AG04450 (cell line): ENCODE measurements at regions of chr6 and their contacts with region 1.

Region 1: DNA sequence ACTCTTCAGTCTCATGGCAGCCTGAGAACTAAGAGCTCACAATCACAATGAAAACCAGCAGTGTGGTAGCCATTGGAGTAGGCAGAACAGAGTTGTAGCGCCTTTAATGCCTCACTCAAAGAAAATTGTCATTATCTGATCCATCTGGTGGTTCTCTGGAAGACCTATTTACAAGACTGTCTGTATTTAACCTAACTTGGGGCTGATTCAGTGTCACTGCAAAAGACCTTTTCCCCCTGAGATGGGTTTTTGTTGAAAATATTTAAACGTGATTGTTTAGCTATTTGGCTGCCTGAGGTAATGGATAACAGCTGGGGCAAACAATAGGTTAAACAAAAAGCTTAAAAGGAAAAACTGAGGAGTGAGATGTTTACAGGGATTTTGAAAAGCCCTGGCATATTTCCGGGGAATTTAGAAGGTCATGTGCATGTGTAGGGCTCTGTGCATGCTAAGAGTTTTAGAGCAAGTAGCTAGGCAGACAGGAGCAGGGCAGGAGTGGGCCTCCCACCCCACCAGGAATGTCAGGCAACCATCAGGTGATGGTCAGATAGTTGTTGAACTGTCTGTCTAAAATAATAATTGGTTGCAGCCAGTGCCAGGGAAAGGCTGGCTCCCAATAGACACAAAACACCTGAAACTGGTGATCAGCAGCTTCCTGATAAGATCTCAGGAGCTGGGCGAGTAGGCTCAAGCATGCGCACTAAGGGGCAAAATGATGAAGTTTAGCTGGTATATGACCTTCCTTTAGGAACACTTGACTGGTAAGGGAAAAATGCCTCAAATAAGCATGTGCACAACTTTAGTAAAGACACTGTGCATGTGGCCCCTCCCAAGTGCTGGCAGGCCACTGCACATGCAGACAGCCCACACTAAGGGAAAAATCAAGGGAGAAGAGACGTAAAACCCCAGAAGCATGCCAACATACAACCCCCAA is 70.8 kb upstream of the AKIRIN2 start:
- DNase-seq: peak; percentile 74
- H3K4me3 ChIP-seq: no peak overlapping the region
- H3K27ac ChIP-seq: peak overlapping the region; percentile 39
- H3K27me3 ChIP-seq: no peaks in the 10 kb centered on the region
- CTCF ChIP-seq: no peak

Region 2: DNA sequence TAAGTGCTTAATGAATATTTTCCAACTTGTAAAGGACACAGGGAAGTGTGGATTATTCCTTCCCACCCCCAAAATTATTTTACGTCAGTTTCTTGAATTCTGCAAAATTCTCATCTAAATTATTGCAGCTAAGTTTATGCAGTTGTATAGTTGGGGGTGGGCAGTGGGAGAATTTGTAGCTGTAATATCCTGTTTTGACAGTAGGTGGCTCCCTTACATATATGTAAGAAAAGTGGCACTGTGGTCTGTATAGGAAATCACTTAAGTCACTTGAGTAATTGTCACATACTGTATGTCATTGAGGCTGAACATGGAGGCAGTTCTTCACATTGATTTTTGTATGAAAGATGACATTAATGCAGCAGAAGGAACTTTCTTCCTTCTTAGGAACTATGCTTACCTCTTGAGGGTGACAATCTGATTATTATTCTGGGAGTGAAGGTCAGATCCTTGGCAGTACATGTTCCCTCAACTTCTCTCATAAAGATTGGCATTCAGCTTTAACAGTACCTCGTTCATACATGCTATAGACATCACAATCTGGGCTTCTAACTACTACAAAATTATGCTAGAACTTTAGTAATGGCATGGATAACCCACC is 379.7 kb before region 1 on chr6:
- CTCF ChIA-PET with region 1: no interaction called
- POLR2A ChIA-PET with region 1: no interaction called
- DNase-seq: no peak
- H3K4me3 ChIP-seq: no peak overlapping the region
- H3K27ac ChIP-seq: no peak overlapping the region
- H3K27me3 ChIP-seq: no peaks in the 10 kb centered on the region
- CTCF ChIP-seq: peak; percentile 73

Region 3: GRCh38 chr6:87701676-87702588 is 70.9 kb before region 1 on chr6 and contains the start of gene AKIRIN2:
- CTCF ChIA-PET with region 1: no interaction called
- POLR2A ChIA-PET with region 1: interaction called, 32 read pairs
- DNase-seq: peak; percentile 98
- H3K4me3 ChIP-seq: peak within 1 kb of the TSS; percentile 82
- H3K27ac ChIP-seq: peak within 1 kb of the TSS; percentile 90
- H3K27me3 ChIP-seq: no peaks in the 10 kb centered on the region
- CTCF ChIP-seq: no peak
- polyA plus RNA-seq, gene AKIRIN2: 30.4 and 31.3 TPM in 2 replicates

Region 4: GRCh38 chr6:87723170-87724078 is 49.4 kb before region 1 on chr6:
- CTCF ChIA-PET with region 1: interaction called, 4 read pairs
- POLR2A ChIA-PET with region 1: interaction called, 13 read pairs
- DNase-seq: peak; percentile 85
- H3K4me3 ChIP-seq: no peak overlapping the region
- H3K27ac ChIP-seq: peak overlapping the region; percentile 91
- H3K27me3 ChIP-seq: no peaks in the 10 kb centered on the region
- CTCF ChIP-seq: no peak

Region 5: GRCh38 chr6:87756858-87757257 is 16.0 kb before region 1 on chr6:
- CTCF ChIA-PET with region 1: interaction called, 3 read pairs
- POLR2A ChIA-PET with region 1: interaction called, 15 read pairs
- DNase-seq: peak; percentile 57
- H3K4me3 ChIP-seq: no peak overlapping the region
- H3K27ac ChIP-seq: peak overlapping the region; percentile 78
- H3K27me3 ChIP-seq: no peaks in the 10 kb centered on the region
- CTCF ChIP-seq: no peak

Region 6: GRCh38 chr6:88535306-88535705 is 762.4 kb after region 1 on chr6:
- CTCF ChIA-PET with region 1: no interaction called
- POLR2A ChIA-PET with region 1: no interaction called
- DNase-seq: no peak
- H3K4me3 ChIP-seq: no peak overlapping the region
- H3K27ac ChIP-seq: no peak overlapping the region
- H3K27me3 ChIP-seq: no peaks in the 10 kb centered on the region
- CTCF ChIP-seq: no peak